Mammary epithelial cell (primary cell): ENCODE measurements at regions of chr3 and their contacts with region 1.

Region 1: DNA sequence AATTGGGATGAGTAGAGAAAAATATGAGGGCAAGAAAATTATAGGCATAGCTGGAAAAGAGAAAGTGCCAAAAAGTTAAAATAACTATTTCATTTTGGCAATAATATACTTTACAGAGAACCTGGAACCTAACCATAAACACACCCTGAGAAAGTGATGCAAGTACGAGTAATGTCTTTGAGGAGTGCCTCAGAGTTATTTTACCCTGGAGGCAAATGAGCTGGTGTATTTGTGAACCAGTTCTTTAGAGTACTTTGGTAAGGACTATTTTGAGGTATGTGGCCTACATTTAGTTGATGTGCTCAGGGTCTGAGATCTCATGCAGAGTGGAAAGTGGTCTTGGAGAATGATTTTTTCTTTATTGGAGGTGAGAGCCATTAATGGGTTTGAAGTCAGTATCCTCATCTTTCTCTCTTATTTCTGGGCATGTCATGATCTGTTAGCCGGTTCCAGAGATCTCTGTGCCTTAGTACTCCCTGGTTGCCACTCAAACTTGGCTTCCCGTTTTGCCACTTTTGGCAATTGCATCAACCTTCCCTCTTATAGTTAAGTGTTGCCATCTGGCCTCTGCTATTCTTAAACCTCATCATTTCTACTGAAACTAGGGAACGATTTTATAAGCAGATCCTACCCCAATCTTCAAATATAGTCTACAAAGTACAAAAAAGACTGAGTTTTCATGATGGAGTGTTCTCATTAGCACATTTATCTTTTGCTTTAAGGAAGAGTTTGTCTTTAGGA is 145.7 kb downstream of the EPHA6 start:
- DNase-seq: peak; percentile 88
- H3K4me3 ChIP-seq: no peak overlapping the region
- H3K27ac ChIP-seq: peak overlapping the region; percentile 93
- H3K4me1 ChIP-seq: peaks cover 33% of the 10 kb centered on the region
- H3K27me3 ChIP-seq: no peaks in the 10 kb centered on the region
- CTCF ChIP-seq: no peak

Region 2: GRCh38 chr3:96970198-96970597 is 10.1 kb after region 1 on chr3:
- CTCF ChIA-PET with region 1: no interaction called
- dilution Hi-C with region 1: no loop called
- in situ Hi-C with region 1: no loop called
- intact Hi-C with region 1: loop called (anchors 1 kb)
- DNase-seq: peak; percentile 73
- H3K4me3 ChIP-seq: no peak overlapping the region
- H3K27ac ChIP-seq: no peak overlapping the region
- H3K4me1 ChIP-seq: peaks cover 7% of the 10 kb centered on the region
- H3K27me3 ChIP-seq: no peaks in the 10 kb centered on the region
- CTCF ChIP-seq: no peak